IMR-90 (cell line): ENCODE measurements at regions of chr9 and their contacts with region 1.

Region 1: DNA sequence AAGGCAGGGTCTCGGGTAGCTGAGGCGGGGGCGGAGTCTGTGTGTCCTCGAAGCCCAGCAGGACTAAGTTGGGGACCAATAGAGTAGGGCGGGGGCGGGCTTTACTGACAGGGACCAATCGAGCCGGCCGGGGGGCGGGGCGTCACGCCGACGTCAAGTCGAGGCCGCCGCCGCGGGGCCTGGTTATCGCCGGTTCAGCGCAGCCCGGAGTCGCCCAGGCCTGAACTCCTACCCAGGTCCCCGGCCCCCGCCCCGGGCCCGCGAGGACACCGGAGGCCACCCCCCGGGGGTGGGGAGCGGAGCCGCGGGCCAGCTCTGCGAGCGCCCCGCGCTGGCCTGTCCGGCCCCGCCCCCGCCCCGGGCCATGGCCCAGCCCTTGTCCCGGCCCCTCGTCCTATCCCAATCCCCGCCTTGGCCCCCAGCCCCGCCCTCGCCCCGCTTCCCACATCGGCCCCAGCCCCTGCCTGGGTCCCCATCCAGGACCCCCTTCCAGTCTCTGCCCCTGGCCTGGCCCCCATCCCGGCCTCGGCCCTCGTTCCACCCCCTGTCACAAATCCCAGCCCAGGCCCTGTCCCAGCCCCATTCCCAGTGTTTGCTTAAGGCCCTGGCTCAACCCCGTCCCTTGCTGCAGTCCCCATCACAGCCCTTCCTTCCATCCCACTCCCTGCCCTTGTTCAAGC is at the start of gene TMEM8B:
- DNase-seq: peak; percentile 83
- ATAC-seq: peak; percentile 94
- H3K4me3 ChIP-seq: peak within 1 kb of the TSS; percentile 91
- H3K27ac ChIP-seq: peak within 1 kb of the TSS; percentile 85
- H3K4me1 ChIP-seq: peaks cover 8% of the 10 kb centered on the region
- H3K27me3 ChIP-seq: no peaks in the 10 kb centered on the region
- CTCF ChIP-seq: no peak
- POLR2A ChIP-seq: 0 out of 2 replicates have a peak, but pooled peaks have one; percentile 31
- RAD21 ChIP-seq: no peak
- total RNA-seq, gene TMEM8B: 0.56 and 0.72 TPM in 2 replicates

Region 2: DNA sequence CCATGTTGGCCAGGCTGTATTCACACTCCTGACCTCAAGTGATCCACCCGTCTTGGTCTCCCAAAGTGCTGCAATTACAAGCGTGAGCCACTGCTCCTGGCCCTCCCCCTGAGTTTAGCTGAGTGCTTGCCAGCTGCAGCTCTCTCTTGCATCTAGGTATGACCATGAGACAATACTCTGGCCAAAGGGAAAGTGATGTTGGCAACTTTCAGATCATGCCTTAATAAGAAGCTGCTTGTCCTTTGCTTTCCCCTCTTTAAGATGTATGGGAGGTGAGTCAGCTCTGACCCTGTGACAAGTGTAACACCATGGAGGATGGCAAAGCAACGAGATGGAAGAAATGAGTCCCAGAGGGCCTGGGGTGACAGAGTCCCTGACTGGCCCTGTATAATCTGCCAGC is 1684.1 kb before region 1 on chr9:
- CTCF ChIA-PET with region 1: no interaction called
- POLR2A ChIA-PET with region 1: interaction called, 25 read pairs
- dilution Hi-C with region 1: no loop called
- in situ Hi-C with region 1: no loop called
- intact Hi-C with region 1: no loop called
- DNase-seq: peak; percentile 24
- ATAC-seq: peak; percentile 17; the same call in 1 of the 2 replicates
- H3K4me3 ChIP-seq: no peak overlapping the region
- H3K27ac ChIP-seq: no peak overlapping the region
- H3K4me1 ChIP-seq: 0 out of 2 replicates have a peak, but pooled peaks cover 1% of the 10 kb centered on the region
- H3K27me3 ChIP-seq: 0 out of 2 replicates have a peak, but pooled peaks cover 2% of the 10 kb centered on the region
- CTCF ChIP-seq: no peak
- POLR2A ChIP-seq: no peak
- RAD21 ChIP-seq: no peak

Region 3: GRCh38 chr9:35736201-35736633 is 93.0 kb before region 1 on chr9:
- CTCF ChIA-PET with region 1: no interaction called
- POLR2A ChIA-PET with region 1: no interaction called
- dilution Hi-C with region 1: no loop called
- in situ Hi-C with region 1: no loop called
- intact Hi-C with region 1: no loop called
- DNase-seq: peak; percentile 79
- ATAC-seq: peak; percentile 32
- H3K4me3 ChIP-seq: no peak overlapping the region
- H3K27ac ChIP-seq: no peak overlapping the region
- H3K4me1 ChIP-seq: no peaks in the 10 kb centered on the region
- H3K27me3 ChIP-seq: no peaks in the 10 kb centered on the region
- CTCF ChIP-seq: peak; percentile 87
- POLR2A ChIP-seq: no peak
- RAD21 ChIP-seq: peak; percentile 71

Region 4: GRCh38 chr9:35814841-35815543 is 14.2 kb before region 1 on chr9 and contains the start of gene HINT2:
- CTCF ChIA-PET with region 1: interaction called, 10 read pairs
- POLR2A ChIA-PET with region 1: no interaction called
- dilution Hi-C with region 1: no loop called
- in situ Hi-C with region 1: no loop called
- intact Hi-C with region 1: no loop called
- DNase-seq: peak; percentile 99
- ATAC-seq: peak; percentile 94
- H3K4me3 ChIP-seq: peak within 1 kb of the TSS; percentile 76
- H3K27ac ChIP-seq: peak within 1 kb of the TSS; percentile 83
- H3K4me1 ChIP-seq: no peaks in the 10 kb centered on the region; the same call in 1 of the 2 replicates
- H3K27me3 ChIP-seq: peaks cover 6% of the 10 kb centered on the region; the same call in 1 of the 2 replicates
- CTCF ChIP-seq: no peak
- POLR2A ChIP-seq: peak; percentile 41; the same call in 1 of the 2 replicates
- RAD21 ChIP-seq: no peak
- total RNA-seq, gene HINT2: 6.7 and 7.5 TPM in 2 replicates

Region 5: GRCh38 chr9:35882263-35882848 is 53.1 kb after region 1 on chr9:
- CTCF ChIA-PET with region 1: interaction called, 37 read pairs
- POLR2A ChIA-PET with region 1: no interaction called
- dilution Hi-C with region 1: no loop called
- in situ Hi-C with region 1: no loop called
- intact Hi-C with region 1: loop called (anchors 1 kb)
- DNase-seq: peak; percentile 71
- ATAC-seq: peak; percentile 94
- H3K4me3 ChIP-seq: no peak overlapping the region
- H3K27ac ChIP-seq: no peak overlapping the region
- H3K4me1 ChIP-seq: no peaks in the 10 kb centered on the region
- H3K27me3 ChIP-seq: peaks cover 5% of the 10 kb centered on the region
- CTCF ChIP-seq: peak; percentile 93
- POLR2A ChIP-seq: no peak
- RAD21 ChIP-seq: peak; percentile 88

Region 6: DNA sequence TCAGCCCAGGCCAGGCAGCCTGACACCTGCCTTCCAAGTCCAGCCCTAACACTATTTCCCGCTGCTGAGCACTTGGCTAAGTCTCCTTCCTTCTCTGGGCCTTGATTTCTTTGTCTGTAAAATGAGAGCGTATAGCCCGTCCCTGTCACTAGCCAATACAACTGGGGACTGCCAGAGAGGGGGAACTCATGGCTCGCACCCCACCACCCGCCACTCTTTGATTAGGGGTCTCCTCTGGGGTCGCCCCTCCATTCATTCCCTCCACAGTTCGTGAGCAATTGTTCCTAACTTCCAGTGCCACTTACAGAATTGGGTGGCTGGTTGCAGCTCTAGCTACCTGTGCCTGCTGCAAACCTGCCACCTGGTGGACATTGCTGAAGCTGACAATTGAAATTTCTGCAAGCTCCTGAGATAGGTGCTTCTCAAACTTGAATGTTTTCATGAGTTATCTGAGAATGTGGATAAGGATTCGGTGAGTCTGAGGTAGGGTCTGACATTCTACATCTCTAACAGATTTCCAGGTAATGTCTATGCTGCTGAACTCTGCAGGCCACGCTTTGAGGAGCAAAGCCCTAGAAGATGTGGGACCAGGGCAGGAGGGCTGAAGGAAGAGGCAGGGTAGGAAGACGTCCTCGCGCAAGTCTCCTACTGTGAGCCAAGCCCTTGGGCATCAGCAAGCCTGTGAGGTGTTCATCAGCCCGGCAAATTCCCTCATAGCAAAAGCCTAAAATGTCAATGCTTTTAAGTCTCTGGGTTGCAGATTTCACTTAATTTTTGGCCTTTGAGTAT is 194.2 kb after region 1 on chr9:
- CTCF ChIA-PET with region 1: no interaction called
- POLR2A ChIA-PET with region 1: no interaction called
- dilution Hi-C with region 1: no loop called
- in situ Hi-C with region 1: no loop called
- intact Hi-C with region 1: loop called (anchors 10 kb)
- DNase-seq: peak; percentile 78
- ATAC-seq: peak; percentile 65
- H3K4me3 ChIP-seq: no peak overlapping the region
- H3K27ac ChIP-seq: no peak overlapping the region
- H3K4me1 ChIP-seq: peaks cover 16% of the 10 kb centered on the region
- H3K27me3 ChIP-seq: no peaks in the 10 kb centered on the region
- CTCF ChIP-seq: peak; percentile 79
- POLR2A ChIP-seq: no peak
- RAD21 ChIP-seq: peak; percentile 90

Region 7: DNA sequence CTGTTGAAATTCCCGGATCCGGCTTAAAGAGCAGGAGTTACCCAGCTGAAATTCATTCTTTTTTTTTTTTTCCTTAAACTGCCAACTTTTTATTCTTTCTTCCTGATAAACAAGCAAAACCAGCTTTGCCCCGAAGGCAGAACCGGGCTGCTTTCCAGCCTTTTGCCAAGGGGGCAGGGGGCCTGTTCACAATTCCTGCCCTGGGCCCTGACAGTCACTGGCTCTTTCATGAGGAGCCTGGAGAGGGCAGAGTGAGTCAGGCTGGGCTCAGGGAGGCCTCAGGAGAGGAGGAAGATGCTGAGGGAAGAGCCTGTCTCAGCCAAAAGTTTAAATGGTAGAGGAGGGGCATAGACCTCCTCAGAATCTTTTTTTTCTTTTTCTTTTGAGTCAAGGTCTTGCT is 312.1 kb after region 1 on chr9:
- CTCF ChIA-PET with region 1: no interaction called
- POLR2A ChIA-PET with region 1: no interaction called
- dilution Hi-C with region 1: no loop called
- in situ Hi-C with region 1: no loop called
- intact Hi-C with region 1: no loop called
- DNase-seq: peak; percentile 41
- ATAC-seq: no peak
- H3K4me3 ChIP-seq: no peak overlapping the region
- H3K27ac ChIP-seq: no peak overlapping the region
- H3K4me1 ChIP-seq: peaks cover 16% of the 10 kb centered on the region
- H3K27me3 ChIP-seq: no peaks in the 10 kb centered on the region
- CTCF ChIP-seq: peak; percentile 43
- POLR2A ChIP-seq: no peak
- RAD21 ChIP-seq: peak; percentile 65